ENCODE measurements at regions of chr1 and their contacts with region 1.

Region 1: GRCh38 chr1:15603050-15603965 is 13.9 kb upstream of the DDI2 start:
- DNase-seq: peak; percentile 98 to 99 (median 99)
- ATAC-seq: peak; percentile 98 to 99
- H3K4me3 ChIP-seq: peak overlapping the region; percentile 81
- H3K27ac ChIP-seq: peak overlapping the region; percentile 85
- H3K4me1 ChIP-seq: no peaks in the 10 kb centered on the region
- H3K27me3 ChIP-seq: no peaks in the 10 kb centered on the region

Region 2: DNA sequence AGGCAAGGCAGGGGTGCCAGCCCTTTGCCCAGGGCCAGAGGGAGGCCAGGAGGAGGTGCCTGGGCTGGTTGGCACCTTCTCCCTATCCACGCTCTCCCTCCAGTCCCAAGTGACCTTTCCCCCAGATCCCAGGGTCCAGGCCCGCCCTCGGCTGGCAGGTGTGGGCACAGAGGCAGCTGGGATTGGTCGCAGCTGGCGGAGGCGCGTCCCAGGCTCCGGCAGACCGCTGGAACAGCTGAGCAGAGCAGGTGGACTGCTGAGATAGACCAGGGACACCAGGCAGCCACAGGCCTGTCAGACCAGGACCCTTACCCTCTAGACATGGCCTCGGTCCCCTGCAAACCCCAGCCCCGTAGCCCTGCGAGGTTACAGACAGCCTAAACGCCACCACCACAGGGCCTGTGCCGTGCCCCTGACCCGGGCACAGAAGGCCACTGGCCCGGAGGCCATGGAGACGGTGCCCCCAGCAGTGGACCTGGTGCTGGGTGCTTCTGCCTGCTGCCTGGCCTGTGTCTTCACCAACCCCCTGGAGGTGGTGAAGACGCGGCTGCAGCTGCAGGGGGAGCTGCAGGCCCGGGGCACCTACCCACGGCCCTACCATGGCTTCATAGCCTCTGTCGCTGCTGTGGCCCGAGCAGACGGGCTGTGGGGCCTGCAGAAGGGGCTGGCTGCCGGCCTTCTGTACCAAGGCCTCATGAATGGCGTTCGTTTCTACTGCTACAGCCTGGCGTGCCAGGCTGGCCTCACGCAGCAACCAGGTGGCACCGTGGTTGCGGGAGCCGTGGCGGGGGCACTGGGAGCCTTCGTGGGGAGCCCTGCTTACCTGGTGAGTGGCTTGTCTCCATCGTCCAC is 133.0 kb after region 1 on chr1 and contains the start of gene SLC25A34:
- intact Hi-C with region 1: loop called (anchors 5 to 10 kb)
- DNase-seq: peak; percentile 64 to 89 (median 81)
- ATAC-seq: peak; percentile 61 to 77
- H3K4me3 ChIP-seq: no peak within 1 kb of the TSS
- H3K27ac ChIP-seq: peak within 1 kb of the TSS; percentile 64
- H3K4me1 ChIP-seq: peaks cover 4% of the 10 kb centered on the region
- H3K27me3 ChIP-seq: no peaks in the 10 kb centered on the region
- total RNA-seq, gene SLC25A34: 3.0 to 4.4 (median 3.3) TPM

Region 3: DNA sequence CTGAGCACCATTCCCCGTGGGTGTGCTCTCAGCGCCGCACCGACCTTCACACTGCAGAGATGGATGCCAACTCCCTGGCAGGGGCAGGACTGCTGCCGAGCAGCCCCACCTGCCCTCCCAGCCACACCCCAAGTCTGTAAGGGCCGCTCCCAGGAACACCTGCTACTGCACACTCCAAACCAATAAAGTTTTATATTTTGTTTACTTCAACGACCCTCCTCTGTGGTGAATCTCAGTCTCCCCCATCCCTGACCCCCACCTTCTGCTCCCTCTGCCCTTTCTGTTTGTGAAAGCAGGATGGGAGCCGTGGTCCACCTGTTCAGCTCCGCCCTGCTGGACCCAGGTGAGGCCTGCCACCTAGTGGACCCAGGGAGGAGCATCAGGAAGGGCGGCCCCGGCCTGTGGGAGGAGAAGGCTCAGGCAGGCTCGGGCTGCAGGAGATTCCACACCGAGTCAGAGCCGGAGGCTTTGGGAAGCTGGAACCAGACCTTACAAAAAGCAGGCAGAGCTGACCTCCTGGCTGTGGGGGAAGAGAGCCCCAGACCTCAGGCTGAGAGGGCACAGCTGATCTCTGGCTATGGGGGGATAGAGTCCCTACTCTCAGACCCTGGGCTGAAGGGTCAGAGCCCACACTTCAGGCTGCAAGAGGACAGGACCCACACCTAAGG is 138.0 kb after region 1 on chr1:
- intact Hi-C with region 1: loop called (anchors 5 to 10 kb)
- DNase-seq: peak; percentile 72 to 89 (median 89)
- ATAC-seq: peak; percentile 72
- H3K4me3 ChIP-seq: no peak overlapping the region
- H3K27ac ChIP-seq: no peak overlapping the region
- H3K4me1 ChIP-seq: no peaks in the 10 kb centered on the region
- H3K27me3 ChIP-seq: no peaks in the 10 kb centered on the region